ENCODE measurements at regions of chr9 and their contacts with region 1.

Region 1: GRCh38 chr9:83980395-83981125 is at the start of gene RMI1:
- DNase-seq: peak; percentile 96
- ATAC-seq: peak; percentile 81
- H3K4me3 ChIP-seq: peak within 1 kb of the TSS; percentile 92 to 98 (median 95)
- H3K27ac ChIP-seq: peak within 1 kb of the TSS; percentile 96
- H3K4me1 ChIP-seq: peaks cover 63% of the 10 kb centered on the region
- H3K27me3 ChIP-seq: peaks cover 0 to 6% of the 10 kb centered on the region in 2 experiments; a peak in 1 of 5 replicates
- CTCF ChIP-seq: peak; percentile 59
- EP300 ChIP-seq: peak in 1 of 2 experiments; percentile 41; a peak in 2 of 4 replicates
- POLR2A ChIP-seq: peak; percentile 89 to 97
- RAD21 ChIP-seq: no peak; the same call in none of the 2 replicates
- total RNA-seq, gene RMI1: 3.7 and 18.4 TPM in 2 replicates

Region 2: DNA sequence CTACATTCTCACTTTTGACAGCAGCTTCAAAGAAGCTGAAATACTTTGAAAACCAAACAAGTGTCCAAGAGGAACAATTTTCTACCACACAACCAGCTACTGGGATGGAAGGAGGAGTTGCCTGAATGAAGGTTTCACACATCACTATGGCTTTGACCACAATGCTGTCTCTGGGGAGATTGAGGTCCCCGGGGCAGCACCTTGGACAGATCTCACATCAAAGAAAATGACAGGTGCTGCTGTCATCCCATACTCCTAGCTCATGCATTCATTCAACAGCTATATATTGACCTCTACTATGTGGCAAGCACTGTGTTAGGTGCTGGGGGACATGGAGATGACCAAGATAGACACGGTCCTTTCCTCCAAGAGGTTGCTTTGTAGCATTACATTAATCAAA is 684.4 kb before region 1 on chr9:
- CTCF ChIA-PET with region 1: no interaction called
- POLR2A ChIA-PET with region 1: no interaction called
- in situ Hi-C with region 1: no loop called
- intact Hi-C with region 1: no loop called
- DNase-seq: no peak
- ATAC-seq: no peak
- H3K4me3 ChIP-seq: no peak overlapping the region
- H3K27ac ChIP-seq: no peak overlapping the region
- H3K4me1 ChIP-seq: no peaks in the 10 kb centered on the region
- H3K27me3 ChIP-seq: no peaks in the 10 kb centered on the region
- CTCF ChIP-seq: no peak
- EP300 ChIP-seq: no peak
- POLR2A ChIP-seq: no peak
- RAD21 ChIP-seq: no peak

Region 3: GRCh38 chr9:83722686-83723085 is 257.9 kb before region 1 on chr9:
- CTCF ChIA-PET with region 1: no interaction called
- POLR2A ChIA-PET with region 1: no interaction called
- in situ Hi-C with region 1: no loop called
- intact Hi-C with region 1: no loop called
- DNase-seq: no peak
- ATAC-seq: no peak
- H3K4me3 ChIP-seq: no peak overlapping the region
- H3K27ac ChIP-seq: no peak overlapping the region
- H3K4me1 ChIP-seq: peaks cover 9% of the 10 kb centered on the region; the same call in 1 of the 2 replicates
- H3K27me3 ChIP-seq: no peaks in the 10 kb centered on the region; a peak in 1 of 5 replicates
- CTCF ChIP-seq: no peak
- EP300 ChIP-seq: no peak
- POLR2A ChIP-seq: no peak
- RAD21 ChIP-seq: no peak

Region 4: GRCh38 chr9:83920927-83921707 is 59.4 kb before region 1 on chr9 and contains the start of gene KIF27:
- CTCF ChIA-PET with region 1: no interaction called
- POLR2A ChIA-PET with region 1: interaction called, 19 read pairs
- in situ Hi-C with region 1: no loop called
- intact Hi-C with region 1: no loop called
- DNase-seq: peak; percentile 92
- ATAC-seq: peak; percentile 96
- H3K4me3 ChIP-seq: peak within 1 kb of the TSS; percentile 63 to 70 (median 68)
- H3K27ac ChIP-seq: peak within 1 kb of the TSS; percentile 95
- H3K4me1 ChIP-seq: peaks cover 16% of the 10 kb centered on the region
- H3K27me3 ChIP-seq: no peaks in the 10 kb centered on the region
- CTCF ChIP-seq: peak; percentile 53
- EP300 ChIP-seq: no peak; a peak in 1 of 4 replicates
- POLR2A ChIP-seq: peak; percentile 90 to 98
- RAD21 ChIP-seq: no peak; the same call in none of the 2 replicates
- total RNA-seq, gene KIF27: 4.1 and 4.4 TPM in 2 replicates

Region 5: GRCh38 chr9:83956434-83957247 is 23.9 kb before region 1 on chr9:
- CTCF ChIA-PET with region 1: no interaction called
- POLR2A ChIA-PET with region 1: interaction called, 96 read pairs
- in situ Hi-C with region 1: no loop called
- intact Hi-C with region 1: no loop called
- DNase-seq: peak; percentile 85
- ATAC-seq: peak; percentile 83
- H3K4me3 ChIP-seq: peak overlapping the region; percentile 63 to 88 (median 76)
- H3K27ac ChIP-seq: peak overlapping the region; percentile 98
- H3K4me1 ChIP-seq: peaks cover 51% of the 10 kb centered on the region
- H3K27me3 ChIP-seq: no peaks in the 10 kb centered on the region; a peak in 1 of 5 replicates
- CTCF ChIP-seq: no peak
- EP300 ChIP-seq: no peak
- POLR2A ChIP-seq: peak; percentile 86 to 87
- RAD21 ChIP-seq: no peak

Region 6: DNA sequence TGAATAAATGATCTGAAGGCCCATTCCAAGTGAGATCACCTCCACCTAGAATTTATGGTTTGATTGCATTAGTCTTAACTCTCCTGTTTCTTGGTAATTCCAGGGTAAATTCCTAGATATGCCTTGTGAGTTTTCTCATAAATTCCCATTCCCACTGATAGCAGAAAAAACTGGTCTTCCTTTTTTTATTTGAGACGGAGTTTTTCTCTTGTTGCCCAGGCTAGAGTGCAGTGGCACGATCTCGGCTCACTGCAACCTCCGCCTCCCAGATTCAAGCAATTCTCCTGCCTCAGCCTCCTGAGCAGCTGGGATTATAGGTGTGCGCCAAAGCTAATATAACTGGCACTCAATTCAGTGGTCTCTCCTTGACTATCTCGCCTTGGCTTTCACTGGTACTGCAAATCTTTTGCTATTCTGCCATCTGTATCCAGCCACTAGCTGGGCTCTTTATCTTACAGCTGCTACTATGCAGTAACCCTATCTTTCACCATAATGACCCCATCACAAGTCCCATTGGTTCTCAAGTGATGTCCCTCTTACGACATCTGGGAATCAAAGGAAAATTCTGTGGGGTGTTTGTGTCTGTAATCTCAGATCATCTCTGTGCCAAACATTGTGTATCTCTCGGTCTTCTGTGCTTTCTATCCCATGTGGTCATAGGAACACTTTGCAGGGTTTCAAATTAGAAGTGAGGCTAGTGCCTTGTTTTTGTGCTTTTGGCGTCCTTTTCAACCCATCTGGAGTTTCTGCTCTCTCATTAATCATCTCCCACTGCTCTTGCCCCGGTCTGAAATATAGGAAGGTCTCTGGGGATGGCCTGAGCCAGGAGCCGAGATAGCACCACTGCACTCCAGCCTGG is 15.0 kb before region 1 on chr9:
- CTCF ChIA-PET with region 1: no interaction called
- POLR2A ChIA-PET with region 1: interaction called, 96 read pairs
- in situ Hi-C with region 1: no loop called
- intact Hi-C with region 1: no loop called
- DNase-seq: peak; percentile 73
- ATAC-seq: peak; percentile 39
- H3K4me3 ChIP-seq: no peak overlapping the region
- H3K27ac ChIP-seq: peak overlapping the region; percentile 17
- H3K4me1 ChIP-seq: peaks cover 9% of the 10 kb centered on the region
- H3K27me3 ChIP-seq: no peaks in the 10 kb centered on the region
- CTCF ChIP-seq: no peak
- EP300 ChIP-seq: no peak
- POLR2A ChIP-seq: peak; percentile 10 to 56; a peak in 3 of 4 replicates
- RAD21 ChIP-seq: no peak

Region 7: DNA sequence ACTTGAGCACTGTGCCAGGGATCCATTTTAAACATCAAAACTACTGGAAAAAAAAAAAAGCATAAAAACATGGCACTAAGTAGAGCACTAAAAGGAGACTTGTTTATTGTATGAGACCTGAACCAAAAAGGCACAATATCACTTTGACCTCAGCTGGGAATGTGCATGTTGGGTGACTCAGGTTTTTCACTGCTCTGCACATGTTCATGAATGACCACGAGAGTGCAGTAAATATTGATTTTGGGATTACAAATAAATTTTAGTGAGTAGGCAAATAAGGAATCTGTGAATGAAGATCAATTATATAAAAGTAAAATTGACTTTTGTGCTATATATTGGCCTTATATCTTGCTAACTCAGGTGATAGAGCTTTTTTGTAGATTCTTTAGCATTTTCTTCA is 11.9 kb after region 1 on chr9:
- CTCF ChIA-PET with region 1: no interaction called
- POLR2A ChIA-PET with region 1: interaction called, 12 read pairs
- in situ Hi-C with region 1: no loop called
- intact Hi-C with region 1: no loop called
- DNase-seq: peak; percentile 84
- ATAC-seq: peak; percentile 93
- H3K4me3 ChIP-seq: no peak overlapping the region
- H3K27ac ChIP-seq: peak overlapping the region; percentile 61
- H3K4me1 ChIP-seq: peaks cover 37% of the 10 kb centered on the region
- H3K27me3 ChIP-seq: no peaks in the 10 kb centered on the region
- CTCF ChIP-seq: peak; percentile 42
- EP300 ChIP-seq: peak in 1 of 2 experiments; percentile 80; a peak in 2 of 4 replicates
- POLR2A ChIP-seq: no peak
- RAD21 ChIP-seq: no peak

Region 8: GRCh38 chr9:84054341-84055010 is 73.9 kb after region 1 on chr9:
- CTCF ChIA-PET with region 1: no interaction called
- POLR2A ChIA-PET with region 1: interaction called, 3 read pairs
- in situ Hi-C with region 1: no loop called
- intact Hi-C with region 1: loop called (anchors 10 kb)
- DNase-seq: peak; percentile 30
- ATAC-seq: peak; percentile 75
- H3K4me3 ChIP-seq: no peak overlapping the region
- H3K27ac ChIP-seq: no peak overlapping the region
- H3K4me1 ChIP-seq: peaks cover 23% of the 10 kb centered on the region
- H3K27me3 ChIP-seq: peaks cover 0 to 6% of the 10 kb centered on the region in 2 experiments; a peak in 1 of 5 replicates
- CTCF ChIP-seq: no peak
- EP300 ChIP-seq: peak in 1 of 2 experiments; percentile 22; a peak in 1 of 4 replicates
- POLR2A ChIP-seq: no peak
- RAD21 ChIP-seq: no peak

Region 9: GRCh38 chr9:84315278-84315877 is 334.8 kb after region 1 on chr9:
- CTCF ChIA-PET with region 1: no interaction called
- POLR2A ChIA-PET with region 1: no interaction called
- in situ Hi-C with region 1: no loop called
- intact Hi-C with region 1: no loop called
- DNase-seq: peak; percentile 23
- ATAC-seq: peak; percentile 64
- H3K4me3 ChIP-seq: no peak overlapping the region
- H3K27ac ChIP-seq: no peak overlapping the region
- H3K4me1 ChIP-seq: no peaks in the 10 kb centered on the region
- H3K27me3 ChIP-seq: peaks cover 0 to 4% of the 10 kb centered on the region in 2 experiments; a peak in 2 of 5 replicates
- CTCF ChIP-seq: peak; percentile 71
- EP300 ChIP-seq: no peak
- POLR2A ChIP-seq: no peak
- RAD21 ChIP-seq: 0 out of 2 replicates have a peak, but pooled peaks have one; percentile 26

Measured in HepG2 (cell line).